ENCODE measurements at regions of chr6 and their contacts with region 1.

Region 1: GRCh38 chr6:27146706-27147505 is 100.6 kb upstream of the PRSS16 start:
- DNase-seq: peak; percentile 100
- H3K27ac ChIP-seq: peak overlapping the region; percentile 97
- CTCF ChIP-seq: no peak

Region 2: DNA sequence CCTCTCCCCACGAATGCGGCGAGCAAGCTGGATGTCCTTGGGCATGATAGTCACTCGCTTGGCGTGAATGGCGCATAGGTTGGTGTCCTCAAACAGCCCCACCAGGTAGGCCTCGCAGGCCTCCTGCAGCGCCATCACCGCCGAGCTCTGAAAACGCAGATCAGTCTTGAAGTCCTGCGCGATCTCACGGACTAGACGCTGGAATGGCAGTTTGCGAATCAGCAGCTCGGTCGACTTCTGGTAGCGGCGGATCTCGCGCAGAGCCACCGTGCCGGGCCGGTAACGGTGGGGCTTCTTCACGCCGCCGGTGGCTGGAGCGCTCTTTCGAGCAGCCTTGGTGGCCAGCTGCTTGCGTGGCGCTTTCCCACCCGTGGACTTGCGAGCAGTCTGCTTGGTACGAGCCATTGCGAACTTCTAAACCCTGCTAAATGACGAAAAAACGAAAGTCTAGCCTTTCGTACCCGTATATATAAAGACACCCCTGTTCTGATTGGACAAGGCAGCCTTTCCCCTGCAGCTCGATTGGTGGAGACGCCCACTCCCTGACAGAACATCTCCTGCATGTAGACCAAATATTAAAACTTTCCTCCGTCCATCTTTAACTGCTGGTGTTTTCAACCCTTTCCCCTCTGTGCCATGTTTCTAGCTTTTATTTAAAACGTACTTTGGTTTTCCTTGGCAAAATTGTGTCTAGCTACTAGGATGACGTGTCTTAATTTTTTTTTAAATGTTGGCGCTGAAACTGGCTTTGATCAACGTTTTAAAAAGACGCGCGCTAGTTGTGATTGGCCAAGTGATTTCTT is 949.9 kb before region 1 on chr6:
- CTCF ChIA-PET with region 1: no interaction called
- POLR2A ChIA-PET with region 1: interaction called, 12 read pairs
- DNase-seq: peak; percentile 92
- H3K27ac ChIP-seq: peak overlapping the region; percentile 95
- CTCF ChIP-seq: no peak

Region 3: DNA sequence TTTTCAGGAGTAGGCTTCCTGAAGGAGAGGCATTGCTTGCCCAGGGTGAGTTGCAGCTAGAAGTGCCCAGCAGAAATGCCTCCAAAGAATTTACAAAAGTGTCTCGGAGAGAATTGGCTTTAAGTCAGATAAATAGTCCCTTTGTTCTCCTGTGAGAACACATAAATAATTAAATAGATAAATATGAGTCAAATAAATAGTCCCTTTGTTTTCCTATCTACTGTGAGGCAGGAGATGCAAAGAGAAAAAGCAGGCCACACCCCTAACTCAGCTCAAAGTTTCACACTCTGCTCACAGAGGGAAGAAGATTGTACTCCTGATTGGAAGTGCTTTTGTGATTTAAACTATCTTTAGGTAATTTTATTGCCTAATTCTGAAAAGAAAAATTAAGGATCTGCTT is 80.1 kb before region 1 on chr6:
- CTCF ChIA-PET with region 1: no interaction called
- POLR2A ChIA-PET with region 1: no interaction called
- DNase-seq: no peak
- H3K27ac ChIP-seq: no peak overlapping the region
- CTCF ChIP-seq: no peak

Region 4: DNA sequence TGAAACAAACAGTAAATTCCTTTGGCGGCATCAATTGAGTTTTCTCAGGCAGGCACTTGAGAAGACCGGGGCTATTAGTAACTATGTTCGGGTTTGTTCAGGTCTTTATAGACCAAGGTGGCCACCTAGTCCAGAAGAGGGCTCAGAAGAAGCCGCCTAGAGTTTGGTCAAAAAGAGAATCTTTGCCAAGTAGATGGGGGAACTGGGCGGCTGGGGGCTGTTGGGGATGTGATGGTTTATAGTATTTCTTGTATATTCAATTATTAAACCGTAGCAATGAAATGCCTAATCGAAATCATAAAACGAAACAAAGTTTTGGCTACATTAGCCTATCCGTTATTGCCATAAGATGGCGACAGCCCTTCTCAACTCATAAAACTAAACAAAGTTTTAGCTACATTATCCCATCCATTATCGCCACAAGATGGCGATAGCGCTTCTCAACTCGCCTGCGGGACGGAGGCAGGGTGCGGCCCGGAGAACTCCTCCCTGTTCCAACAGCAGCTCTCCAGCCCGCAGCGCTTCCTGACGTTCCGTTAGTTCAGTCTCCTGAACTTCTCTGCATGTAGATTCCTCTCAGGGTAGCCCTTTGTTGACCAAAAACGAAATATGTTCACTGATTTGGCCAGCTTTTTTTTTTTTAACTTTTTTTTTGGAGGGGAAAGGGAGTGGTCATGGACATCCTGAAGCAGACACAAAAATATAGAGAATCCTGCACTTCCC is 19.9 kb before region 1 on chr6:
- CTCF ChIA-PET with region 1: interaction called, 5 read pairs
- POLR2A ChIA-PET with region 1: interaction called, 35 read pairs
- DNase-seq: peak; percentile 71
- H3K27ac ChIP-seq: peak overlapping the region; percentile 66
- CTCF ChIP-seq: peak; percentile 86

Region 5: DNA sequence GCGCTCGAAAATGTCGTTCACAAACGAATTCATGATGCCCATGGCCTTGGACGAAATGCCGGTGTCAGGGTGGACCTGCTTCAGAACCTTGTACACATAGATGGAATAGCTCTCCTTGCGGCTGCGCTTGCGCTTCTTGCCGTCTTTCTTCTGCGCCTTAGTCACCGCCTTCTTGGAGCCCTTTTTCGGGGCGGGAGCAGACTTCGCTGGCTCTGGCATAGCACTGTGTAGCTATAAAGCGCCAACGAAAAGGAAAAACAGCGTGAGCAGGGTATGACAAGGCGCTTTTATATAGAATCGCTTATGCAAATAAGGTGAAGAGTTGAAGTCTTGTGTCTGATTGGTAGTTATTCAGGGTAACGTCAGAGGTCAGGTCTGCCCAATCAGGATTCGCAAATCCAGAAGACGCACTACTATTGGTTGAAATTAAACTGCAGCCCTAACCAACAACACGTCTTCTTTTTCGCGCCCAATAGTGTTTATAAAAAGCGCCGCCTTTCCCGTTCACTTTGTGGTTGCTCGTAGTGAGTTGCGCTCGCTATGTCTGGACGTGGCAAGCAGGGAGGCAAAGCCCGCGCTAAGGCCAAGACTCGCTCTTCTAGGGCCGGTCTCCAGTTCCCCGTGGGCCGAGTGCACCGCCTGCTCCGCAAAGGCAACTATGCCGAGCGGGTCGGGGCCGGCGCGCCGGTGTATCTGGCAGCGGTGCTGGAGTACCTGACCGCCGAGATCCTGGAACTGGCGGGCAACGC is 14.2 kb before region 1 on chr6:
- CTCF ChIA-PET with region 1: interaction called, 5 read pairs
- POLR2A ChIA-PET with region 1: interaction called, 35 read pairs
- DNase-seq: peak; percentile 100
- H3K27ac ChIP-seq: peak overlapping the region; percentile 99
- CTCF ChIP-seq: no peak